H1 (cell line): ENCODE measurements at regions of chr6 and their contacts with region 1.

Region 1: DNA sequence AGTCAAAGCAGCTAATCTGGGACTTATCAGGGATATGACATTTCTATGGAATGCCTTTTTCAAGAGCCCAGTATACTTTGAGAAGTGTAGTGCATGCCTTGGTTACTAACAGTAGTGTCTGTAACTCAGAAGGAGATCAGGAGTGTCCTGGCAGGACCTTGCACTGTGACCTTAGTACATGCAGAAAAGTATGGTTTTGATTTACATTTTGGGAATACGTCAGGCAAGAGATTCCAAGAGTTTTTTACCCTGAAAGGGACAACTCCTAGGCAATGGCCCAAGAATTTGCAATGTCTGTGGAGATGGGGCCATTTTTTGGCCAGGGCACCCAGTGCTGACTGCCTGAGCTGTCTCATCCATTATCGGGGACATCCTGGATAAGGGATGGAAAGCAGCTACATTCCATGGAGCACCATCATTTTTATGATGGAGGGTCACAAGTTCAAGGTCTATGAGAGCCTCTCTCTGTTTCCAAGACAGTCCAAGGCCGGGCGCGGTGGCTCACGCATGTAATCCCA is 80.2 kb downstream of the FAM50B start:
- DNase-seq: no peak
- H3K4me3 ChIP-seq: no peak overlapping the region
- H3K27ac ChIP-seq: no peak overlapping the region
- H3K4me1 ChIP-seq: no peaks in the 10 kb centered on the region
- H3K27me3 ChIP-seq: no peaks in the 10 kb centered on the region
- CTCF ChIP-seq: no peak
- EP300 ChIP-seq: no peak
- POLR2A ChIP-seq: no peak
- RAD21 ChIP-seq: no peak

Region 2: DNA sequence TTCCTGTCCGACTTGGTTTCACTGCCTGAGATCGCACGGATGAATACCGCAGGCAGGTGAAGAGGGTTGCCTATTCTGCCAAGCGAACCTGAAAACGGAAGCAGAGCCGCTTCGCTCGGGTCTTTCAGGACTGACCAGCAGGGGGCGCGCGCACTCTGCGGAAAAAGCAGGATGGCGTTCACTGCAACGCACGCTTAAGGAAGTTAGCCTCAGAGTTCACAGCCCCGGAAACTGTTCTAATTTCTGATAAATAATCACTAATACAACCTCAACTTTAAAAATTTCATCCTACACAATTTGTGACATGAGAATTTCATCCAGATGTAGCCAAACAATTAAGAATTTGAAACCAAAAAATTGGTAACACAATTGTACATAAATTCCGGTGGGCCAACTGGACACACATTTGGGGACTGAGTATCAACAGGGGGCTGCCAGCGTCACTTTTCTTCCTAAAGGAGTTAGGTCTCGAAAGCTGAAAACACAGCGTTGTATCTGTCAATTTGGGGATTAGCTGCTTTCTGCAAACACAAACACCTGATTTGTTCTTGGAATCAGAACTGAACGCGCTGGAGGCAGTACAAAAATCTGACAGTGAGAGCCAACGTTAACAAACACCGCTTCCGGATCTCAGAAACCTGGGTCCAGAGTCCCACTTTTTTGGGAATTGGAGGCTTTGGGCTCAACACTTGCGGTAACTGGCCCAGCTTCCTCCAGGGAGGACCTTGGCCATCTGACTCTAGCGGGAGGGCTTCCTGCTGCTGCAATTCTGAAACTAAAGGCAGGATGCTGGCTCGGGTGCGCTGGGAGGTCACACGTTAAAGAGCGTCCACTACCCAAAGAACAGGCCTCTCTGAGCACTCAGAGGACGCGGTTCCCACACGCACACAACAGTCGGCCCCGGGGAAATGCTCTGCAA is 186.7 kb before region 1 on chr6:
- CTCF ChIA-PET with region 1: interaction called, 40 read pairs
- POLR2A ChIA-PET with region 1: no interaction called
- DNase-seq: peak; percentile 60 to 98
- H3K4me3 ChIP-seq: no peak overlapping the region
- H3K27ac ChIP-seq: no peak overlapping the region
- H3K4me1 ChIP-seq: peaks cover 0 to 9% (median 4%) of the 10 kb centered on the region in 4 experiments; a peak in 5 of 7 replicates
- H3K27me3 ChIP-seq: peaks cover 0 to 2% (median 0%) of the 10 kb centered on the region in 4 experiments; a peak in 1 of 7 replicates
- CTCF ChIP-seq: peak in 2 of 3 experiments; percentile 91 to 94; a peak in 3 of 4 replicates
- EP300 ChIP-seq: no peak
- POLR2A ChIP-seq: no peak
- RAD21 ChIP-seq: peak; percentile 96 to 97

Region 3: DNA sequence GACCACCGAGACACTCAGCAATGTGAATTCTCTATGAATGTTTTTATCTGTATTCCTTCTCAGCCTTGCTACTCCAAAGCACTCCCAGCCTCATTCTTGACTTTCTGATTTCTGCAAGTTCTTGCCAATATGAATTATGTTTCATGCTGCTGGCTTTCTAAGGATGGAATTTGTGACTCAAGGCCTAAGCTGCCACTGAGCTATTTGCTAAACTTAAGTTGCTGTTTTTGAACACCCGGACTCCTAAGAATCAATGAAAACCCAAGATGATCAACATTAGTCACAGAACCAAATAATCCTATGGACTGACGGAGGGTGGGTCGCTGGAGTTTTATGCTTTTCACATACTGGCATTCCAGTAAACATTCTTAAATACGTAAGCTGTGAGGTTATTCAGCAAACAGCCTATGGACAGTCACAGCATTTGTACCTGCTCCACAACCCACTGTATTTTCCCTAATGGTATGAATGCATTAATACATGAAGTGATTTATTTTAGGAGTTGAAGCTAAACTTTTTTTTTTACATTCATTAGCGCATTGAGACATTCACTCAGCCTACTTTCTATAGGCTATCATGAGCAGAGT is 169.6 kb before region 1 on chr6:
- CTCF ChIA-PET with region 1: interaction called, 13 read pairs
- POLR2A ChIA-PET with region 1: no interaction called
- DNase-seq: no peak
- H3K4me3 ChIP-seq: no peak overlapping the region
- H3K27ac ChIP-seq: no peak overlapping the region
- H3K4me1 ChIP-seq: peaks cover 3 to 16% (median 7%) of the 10 kb centered on the region in 4 experiments; a peak in 6 of 7 replicates
- H3K27me3 ChIP-seq: no peaks in the 10 kb centered on the region; a peak in 2 of 7 replicates
- CTCF ChIP-seq: no peak
- EP300 ChIP-seq: no peak
- POLR2A ChIP-seq: no peak
- RAD21 ChIP-seq: no peak

Region 4: GRCh38 chr6:3887150-3887700 is 42.1 kb before region 1 on chr6:
- CTCF ChIA-PET with region 1: interaction called, 14 read pairs
- POLR2A ChIA-PET with region 1: no interaction called
- DNase-seq: no peak
- H3K4me3 ChIP-seq: no peak overlapping the region
- H3K27ac ChIP-seq: no peak overlapping the region
- H3K4me1 ChIP-seq: peaks cover 0 to 2% (median 0%) of the 10 kb centered on the region in 4 experiments; a peak in 1 of 7 replicates
- H3K27me3 ChIP-seq: no peaks in the 10 kb centered on the region
- CTCF ChIP-seq: no peak
- EP300 ChIP-seq: no peak
- POLR2A ChIP-seq: no peak
- RAD21 ChIP-seq: peak; percentile 39 to 47

Region 5: DNA sequence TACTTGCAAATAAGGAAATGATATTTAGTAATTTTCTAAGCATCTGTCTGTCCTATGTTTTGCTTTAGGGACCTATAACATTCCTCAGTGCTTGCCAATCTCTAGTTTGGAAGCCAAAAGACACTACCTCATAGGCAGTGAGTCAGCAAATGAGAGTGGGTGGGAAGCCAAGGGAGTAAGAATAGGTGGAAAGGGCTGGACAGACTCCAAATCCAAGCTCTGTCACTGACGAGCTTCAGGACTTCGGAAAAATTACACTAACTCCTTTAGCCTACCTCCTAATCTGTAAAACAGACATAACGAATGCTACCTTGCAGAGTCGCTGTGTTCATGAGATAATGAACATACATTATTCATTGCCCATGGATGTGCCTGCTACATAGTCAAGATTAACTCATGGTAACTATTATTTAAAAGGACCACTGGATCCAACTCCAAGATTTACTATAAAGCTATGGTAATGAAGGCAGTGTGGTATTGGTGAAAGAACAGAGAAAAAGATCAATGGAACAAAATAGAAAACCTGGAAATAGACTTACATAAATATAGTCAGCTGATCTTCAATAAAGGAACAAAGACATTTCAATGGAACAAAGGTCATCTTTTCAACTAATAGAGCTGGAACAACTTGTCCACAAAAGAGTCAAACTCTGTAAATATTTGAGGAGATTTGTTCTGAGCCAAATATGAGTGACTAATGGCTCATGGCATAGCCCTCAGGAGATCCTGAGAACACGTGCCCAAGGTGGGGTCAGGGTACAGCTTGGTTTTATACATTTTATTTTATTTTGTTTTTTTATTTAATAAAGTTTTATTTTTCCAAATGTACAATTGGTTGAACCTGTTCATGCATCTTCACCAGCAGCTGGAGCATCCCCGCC is 16.0 kb before region 1 on chr6:
- CTCF ChIA-PET with region 1: interaction called, 15 read pairs
- POLR2A ChIA-PET with region 1: no interaction called
- DNase-seq: peak in 1 of 2 experiments; percentile 7
- H3K4me3 ChIP-seq: no peak overlapping the region
- H3K27ac ChIP-seq: no peak overlapping the region
- H3K4me1 ChIP-seq: peaks cover 0 to 3% (median 3%) of the 10 kb centered on the region in 4 experiments; a peak in 3 of 7 replicates
- H3K27me3 ChIP-seq: no peaks in the 10 kb centered on the region; a peak in 2 of 7 replicates
- CTCF ChIP-seq: no peak
- EP300 ChIP-seq: no peak
- POLR2A ChIP-seq: no peak
- RAD21 ChIP-seq: no peak

Region 6: GRCh38 chr6:3990692-3991501 is 61.6 kb after region 1 on chr6:
- CTCF ChIA-PET with region 1: interaction called, 14 read pairs
- POLR2A ChIA-PET with region 1: no interaction called
- DNase-seq: peak; percentile 73 to 93
- H3K4me3 ChIP-seq: no peak overlapping the region; a peak in 1 of 8 replicates
- H3K27ac ChIP-seq: no peak overlapping the region
- H3K4me1 ChIP-seq: peaks cover 2 to 14% (median 8%) of the 10 kb centered on the region in 4 experiments; a peak in 5 of 7 replicates
- H3K27me3 ChIP-seq: no peaks in the 10 kb centered on the region
- CTCF ChIP-seq: peak; percentile 91 to 98 (median 93)
- EP300 ChIP-seq: no peak
- POLR2A ChIP-seq: no peak
- RAD21 ChIP-seq: peak; percentile 90 to 96

Region 7: DNA sequence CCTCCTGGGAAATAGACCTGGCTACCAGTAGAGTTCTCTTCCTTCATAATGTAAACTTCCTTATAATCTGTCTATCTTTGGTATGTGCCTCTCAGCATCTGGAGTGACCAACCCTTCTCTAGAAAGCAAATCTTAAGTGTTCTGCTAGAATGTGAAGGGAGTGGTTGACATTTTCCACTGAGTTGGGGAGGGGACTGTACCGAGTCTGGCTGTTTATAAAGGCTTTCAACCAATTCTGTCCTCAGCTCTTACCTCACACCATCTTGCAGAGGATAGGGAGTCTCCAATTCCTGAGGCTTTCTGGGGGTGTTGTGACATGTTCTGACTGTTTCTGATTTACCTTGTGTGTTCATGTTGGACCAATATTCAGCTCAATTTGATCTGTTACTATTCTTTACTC is 110.0 kb after region 1 on chr6:
- CTCF ChIA-PET with region 1: no interaction called
- POLR2A ChIA-PET with region 1: no interaction called
- DNase-seq: no peak
- H3K4me3 ChIP-seq: no peak overlapping the region
- H3K27ac ChIP-seq: no peak overlapping the region
- H3K4me1 ChIP-seq: no peaks in the 10 kb centered on the region
- H3K27me3 ChIP-seq: no peaks in the 10 kb centered on the region
- CTCF ChIP-seq: no peak
- EP300 ChIP-seq: no peak
- POLR2A ChIP-seq: no peak
- RAD21 ChIP-seq: no peak